HEK293 (cell line): ENCODE measurements at regions of chr5 and their contacts with region 1.

Region 1: GRCh38 chr5:10283927-10284635 is 23.6 kb downstream of the CMBL start:
- H3K4me3 ChIP-seq: no peak overlapping the region
- H3K27ac ChIP-seq: no peak overlapping the region
- H3K4me1 ChIP-seq: peaks cover 11% of the 10 kb centered on the region
- CTCF ChIP-seq: peak; percentile 64; the same call in 1 of the 2 replicates

Region 2: DNA sequence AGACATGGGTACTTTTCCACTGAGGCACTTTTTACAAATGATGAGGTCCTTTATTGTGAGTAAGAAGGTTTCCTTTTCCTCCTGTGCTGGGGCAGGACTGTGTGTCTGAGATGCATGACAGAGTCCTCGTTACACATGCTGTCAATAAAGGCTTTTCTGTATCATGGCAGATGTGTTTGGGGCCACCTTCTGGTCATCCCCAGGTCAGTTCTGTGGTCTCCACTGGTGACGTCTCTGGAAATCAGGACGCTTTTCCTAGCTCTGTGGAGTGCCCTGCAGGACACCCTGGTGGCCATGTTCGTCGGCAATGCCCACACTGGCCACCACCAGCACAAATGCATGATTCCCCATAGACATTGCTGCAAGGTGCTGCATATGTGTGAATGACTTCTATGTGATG is 20.9 kb after region 1 on chr5:
- CTCF ChIA-PET with region 1: interaction called, 12 read pairs
- POLR2A ChIA-PET with region 1: no interaction called
- H3K4me3 ChIP-seq: no peak overlapping the region
- H3K27ac ChIP-seq: no peak overlapping the region
- H3K4me1 ChIP-seq: no peaks in the 10 kb centered on the region
- CTCF ChIP-seq: peak; percentile 67

Region 3: GRCh38 chr5:10358999-10359398 is 74.9 kb after region 1 on chr5:
- CTCF ChIA-PET with region 1: interaction called, 22 read pairs
- POLR2A ChIA-PET with region 1: interaction called, 3 read pairs
- H3K4me3 ChIP-seq: no peak overlapping the region
- H3K27ac ChIP-seq: no peak overlapping the region
- H3K4me1 ChIP-seq: peaks cover 18% of the 10 kb centered on the region
- CTCF ChIP-seq: no peak

Region 4: GRCh38 chr5:10387690-10388089 is 103.6 kb after region 1 on chr5:
- CTCF ChIA-PET with region 1: interaction called, 12 read pairs
- POLR2A ChIA-PET with region 1: no interaction called
- H3K4me3 ChIP-seq: no peak overlapping the region
- H3K27ac ChIP-seq: no peak overlapping the region
- H3K4me1 ChIP-seq: no peaks in the 10 kb centered on the region
- CTCF ChIP-seq: no peak